ENCODE measurements at regions of chr1 and their contacts with region 1.

Region 1: DNA sequence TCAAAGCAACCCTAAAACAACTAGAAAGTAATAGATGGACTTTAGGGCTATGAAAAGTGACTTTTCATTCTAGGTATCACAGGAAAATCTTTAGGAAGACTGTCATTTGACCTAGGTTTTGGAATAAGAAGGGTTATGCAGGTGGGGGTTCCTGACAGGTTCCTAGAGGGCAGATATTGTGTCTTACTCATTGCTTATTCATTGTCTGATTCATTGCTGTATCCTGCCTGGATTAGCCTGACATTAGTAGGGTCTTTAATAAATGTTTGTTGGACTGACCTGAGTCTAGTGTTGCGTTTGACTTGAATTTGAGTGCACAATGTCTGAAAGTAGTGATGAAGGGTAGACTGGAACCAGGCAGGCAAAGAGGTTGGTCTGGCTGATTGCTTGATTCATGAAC is 6.0 kb downstream of the FNBP1L start:
- DNase-seq: no peak
- ATAC-seq: no peak
- H3K4me3 ChIP-seq: no peak overlapping the region
- H3K4me3 Mint-ChIP-seq: no peak overlapping the region
- H3K27ac ChIP-seq: no peak overlapping the region
- H3K27ac Mint-ChIP-seq: no peak overlapping the region
- H3K4me1 ChIP-seq: peaks cover 3 to 6% of the 10 kb centered on the region in 2 experiments
- H3K4me1 Mint-ChIP-seq: peaks cover 6 to 7% (median 6%) of the 10 kb centered on the region in 3 donors
- H3K27me3 ChIP-seq: peaks cover 2 to 25% of the 10 kb centered on the region in 2 experiments
- H3K27me3 Mint-ChIP-seq: peaks cover 22 to 48% of the 10 kb centered on the region in 2 donors

Region 2: DNA sequence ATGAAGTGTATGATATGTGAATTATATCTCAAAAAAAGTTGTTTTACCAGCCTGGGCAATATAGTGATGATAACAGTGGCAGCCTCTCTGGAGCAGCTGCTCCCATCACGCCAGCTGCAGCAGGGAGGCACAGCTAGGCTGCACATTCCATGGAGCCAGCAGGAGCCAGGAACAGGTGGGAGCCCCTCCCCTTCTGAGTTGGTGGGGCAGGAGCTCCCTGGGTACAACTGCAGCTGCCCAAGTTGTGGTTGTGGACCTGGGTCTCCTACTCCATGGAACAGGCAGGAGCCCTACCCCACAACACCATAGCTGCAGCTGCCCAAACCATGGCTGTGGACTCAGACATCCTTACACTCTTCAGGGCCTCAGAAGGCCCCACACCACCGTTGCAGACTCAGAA is 27.7 kb before region 1 on chr1:
- CTCF ChIA-PET with region 1: no interaction called
- POLR2A ChIA-PET with region 1: no interaction called
- DNase-seq: no peak
- ATAC-seq: no peak
- H3K4me3 ChIP-seq: no peak overlapping the region
- H3K4me3 Mint-ChIP-seq: no peak overlapping the region
- H3K27ac ChIP-seq: no peak overlapping the region
- H3K27ac Mint-ChIP-seq: no peak overlapping the region
- H3K4me1 ChIP-seq: no peaks in the 10 kb centered on the region
- H3K4me1 Mint-ChIP-seq: no peaks in the 10 kb centered on the region
- H3K27me3 ChIP-seq: peaks cover 0 to 19% of the 10 kb centered on the region in 2 experiments
- H3K27me3 Mint-ChIP-seq: peaks cover 4 to 15% of the 10 kb centered on the region in 2 donors

Region 3: GRCh38 chr1:93607814-93608186 is 153.9 kb after region 1 on chr1:
- CTCF ChIA-PET with region 1: no interaction called
- POLR2A ChIA-PET with region 1: no interaction called
- DNase-seq: no peak
- ATAC-seq: no peak
- H3K4me3 ChIP-seq: no peak overlapping the region
- H3K4me3 Mint-ChIP-seq: no peak overlapping the region
- H3K27ac ChIP-seq: no peak overlapping the region
- H3K27ac Mint-ChIP-seq: no peak overlapping the region
- H3K4me1 ChIP-seq: no peaks in the 10 kb centered on the region
- H3K4me1 Mint-ChIP-seq: peaks cover 0 to 3% (median 2%) of the 10 kb centered on the region in 3 donors
- H3K27me3 ChIP-seq: peaks cover 0 to 9% of the 10 kb centered on the region in 2 experiments
- H3K27me3 Mint-ChIP-seq: no peaks in the 10 kb centered on the region

Region 4: GRCh38 chr1:94962409-94963265 is 1508.7 kb after region 1 on chr1:
- CTCF ChIA-PET with region 1: interaction called in 1 of 2 experiments, 17 read pairs
- POLR2A ChIA-PET with region 1: no interaction called
- DNase-seq: peak in 22 of 35 experiments; percentile 1 to 57 (median 9)
- ATAC-seq: peak; percentile 65 to 90 (median 78)
- H3K4me3 ChIP-seq: peak overlapping the region; percentile 50 to 53
- H3K4me3 Mint-ChIP-seq: peak overlapping the region; percentile 89 to 93 (median 91)
- H3K27ac ChIP-seq: peak overlapping the region; percentile 42
- H3K27ac Mint-ChIP-seq: peak overlapping the region; percentile 96 to 98
- H3K4me1 ChIP-seq: peaks cover 10 to 11% of the 10 kb centered on the region in 2 experiments
- H3K4me1 Mint-ChIP-seq: peaks cover 10 to 15% (median 15%) of the 10 kb centered on the region in 3 donors
- H3K27me3 ChIP-seq: no peaks in the 10 kb centered on the region
- H3K27me3 Mint-ChIP-seq: no peaks in the 10 kb centered on the region